ENCODE measurements at regions of chr17 and their contacts with region 1.

Region 1: DNA sequence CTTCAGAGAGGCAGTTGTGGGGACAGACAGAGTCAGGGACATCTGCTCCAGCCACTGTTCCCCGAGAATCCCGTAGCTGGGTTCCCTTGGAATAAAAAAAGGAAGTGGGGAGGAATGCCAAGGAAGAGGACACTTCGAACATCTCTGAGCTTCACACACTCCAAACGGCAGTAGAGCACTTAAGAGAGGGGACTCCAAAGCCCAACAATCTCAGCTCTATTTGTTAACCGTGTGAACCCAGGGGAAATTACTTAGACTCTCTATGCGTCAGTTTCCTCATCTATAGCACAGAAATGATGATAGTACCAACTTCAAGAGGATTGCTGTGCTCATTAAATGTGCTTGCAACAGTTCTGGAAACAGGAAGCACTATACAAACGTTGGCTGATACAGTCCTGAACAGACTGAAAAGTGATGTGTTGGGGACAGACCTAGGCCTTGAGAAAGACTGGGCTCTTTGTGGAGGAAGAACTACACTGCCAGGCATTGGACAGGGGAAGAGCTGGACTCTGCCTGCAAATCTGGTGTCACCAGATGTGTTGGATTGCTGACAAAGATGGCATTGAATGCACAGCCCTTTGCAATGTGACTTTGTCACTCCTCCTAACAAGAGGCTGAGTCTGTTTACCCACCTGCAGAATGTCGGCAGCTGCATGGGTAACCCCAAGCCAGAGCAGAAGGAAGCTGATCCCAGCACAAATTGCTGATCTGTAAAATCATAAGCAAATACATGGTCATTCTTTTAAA is 12.2 kb upstream of the ST6GALNAC2 start:
- DNase-seq: no peak
- ATAC-seq: 0 out of 2 replicates have a peak, but pooled peaks have one; percentile 14
- H3K4me3 ChIP-seq: no peak overlapping the region
- H3K27ac ChIP-seq: no peak overlapping the region
- H3K4me1 ChIP-seq: 0 out of 2 replicates have a peak, but pooled peaks cover 2% of the 10 kb centered on the region
- H3K27me3 ChIP-seq: no peaks in the 10 kb centered on the region
- CTCF ChIP-seq: no peak

Region 2: GRCh38 chr17:76581515-76581914 is 16.4 kb before region 1 on chr17:
- CTCF ChIA-PET with region 1: interaction called, 11 read pairs
- POLR2A ChIA-PET with region 1: interaction called, 4 read pairs
- in situ Hi-C with region 1: no loop called
- intact Hi-C with region 1: no loop called
- DNase-seq: no peak
- ATAC-seq: no peak
- H3K4me3 ChIP-seq: no peak overlapping the region
- H3K27ac ChIP-seq: no peak overlapping the region
- H3K4me1 ChIP-seq: peaks cover 21% of the 10 kb centered on the region
- H3K27me3 ChIP-seq: no peaks in the 10 kb centered on the region
- CTCF ChIP-seq: no peak

Region 3: GRCh38 chr17:76868176-76868668 is 270.3 kb after region 1 on chr17 and contains the start of gene MGAT5B:
- CTCF ChIA-PET with region 1: no interaction called
- POLR2A ChIA-PET with region 1: no interaction called
- in situ Hi-C with region 1: no loop called
- intact Hi-C with region 1: no loop called
- DNase-seq: no peak
- ATAC-seq: peak; percentile 80
- H3K4me3 ChIP-seq: peak within 1 kb of the TSS; percentile 65 to 73
- H3K27ac ChIP-seq: peak within 1 kb of the TSS; percentile 78
- H3K4me1 ChIP-seq: peaks cover 42% of the 10 kb centered on the region
- H3K27me3 ChIP-seq: no peaks in the 10 kb centered on the region
- CTCF ChIP-seq: peak; percentile 99
- total RNA-seq, gene MGAT5B: 34.9 TPM